Posterior vena cava (tissue), 2 donors: ENCODE measurements at regions of chr17 and their contacts with region 1.

Region 1: GRCh38 chr17:5536866-5537650 is 47.3 kb downstream of the NLRP1 start:
- DNase-seq: peak; percentile 70

Region 2: DNA sequence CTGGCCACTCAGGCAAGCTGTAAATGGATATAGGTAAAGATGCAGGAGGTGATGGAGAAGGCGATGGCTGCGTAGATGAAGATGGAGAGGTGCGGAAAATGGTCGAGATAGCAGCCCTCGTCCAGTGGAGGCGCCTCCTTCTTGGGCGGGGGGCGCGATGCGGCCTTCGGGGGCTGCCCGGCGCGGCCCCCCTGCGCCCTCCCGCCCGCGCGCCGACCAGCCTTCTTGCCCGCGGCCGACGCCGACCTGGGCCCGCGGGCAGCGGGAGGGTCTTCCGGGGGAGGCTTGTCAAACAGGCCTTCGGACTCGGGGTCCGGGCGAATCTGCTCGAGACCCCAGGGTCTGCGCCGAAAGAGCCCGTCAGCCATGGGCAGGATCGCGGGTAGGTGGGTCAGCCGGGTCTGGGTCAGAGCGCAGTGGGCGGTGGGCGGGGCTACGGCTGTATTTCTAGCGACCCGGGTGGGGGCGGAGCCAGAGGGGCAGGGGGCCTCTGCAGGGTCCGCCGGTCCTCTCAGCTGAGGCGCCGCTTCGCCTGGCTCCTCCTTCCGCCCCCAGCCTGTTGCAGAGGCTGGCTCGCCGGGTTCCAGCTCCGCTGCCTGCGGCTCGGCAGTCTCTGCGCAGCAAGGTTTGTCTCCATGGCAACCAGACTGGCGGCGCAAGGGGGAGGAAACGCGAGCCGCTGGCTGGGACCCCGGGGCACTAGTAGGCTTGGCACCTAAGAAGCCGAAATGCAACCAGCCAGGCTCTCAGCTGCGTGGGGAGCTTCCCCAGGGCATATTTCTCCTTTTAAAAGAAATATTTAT is 36.3 kb before region 1 on chr17:
- intact Hi-C with region 1: no loop called
- DNase-seq: peak; percentile 92

Region 3: DNA sequence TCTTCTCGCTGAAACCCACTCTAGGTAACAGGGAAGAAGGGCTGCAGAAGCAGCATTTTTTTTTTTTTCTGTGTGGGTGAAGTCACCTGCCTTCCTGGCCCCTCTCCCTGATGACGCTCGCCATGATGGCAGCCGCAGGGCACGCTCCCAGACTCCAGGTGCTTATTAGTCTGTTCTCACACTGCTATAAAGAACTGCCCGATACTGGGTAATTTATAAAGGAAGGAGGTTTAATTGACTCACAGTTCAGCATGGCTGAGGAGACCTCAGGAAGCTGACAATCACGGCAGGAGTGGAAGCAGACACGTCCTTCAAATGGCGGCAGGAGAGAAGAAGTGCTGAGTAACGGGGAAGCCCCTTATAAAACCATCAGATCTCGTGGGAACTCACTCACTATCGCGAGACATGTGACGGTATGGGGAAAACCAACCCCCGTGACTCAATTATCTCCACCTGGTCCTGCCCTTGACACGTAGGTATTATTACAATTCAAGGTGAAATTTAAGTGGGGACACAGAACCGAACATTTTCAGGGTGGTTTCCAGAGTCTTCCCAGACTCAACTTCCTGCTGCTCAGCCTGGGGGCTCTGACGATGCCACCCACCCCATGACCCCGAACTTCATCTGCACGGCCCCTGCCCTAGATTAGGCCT is 82.2 kb after region 1 on chr17:
- intact Hi-C with region 1: no loop called
- DNase-seq: no peak

Region 4: GRCh38 chr17:5897275-5897911 is 360.3 kb after region 1 on chr17:
- intact Hi-C with region 1: loop called in 1 of 2 experiments (anchors 10 kb)
- DNase-seq: no peak